ENCODE measurements at regions of chr15 and their contacts with region 1.

Region 1: DNA sequence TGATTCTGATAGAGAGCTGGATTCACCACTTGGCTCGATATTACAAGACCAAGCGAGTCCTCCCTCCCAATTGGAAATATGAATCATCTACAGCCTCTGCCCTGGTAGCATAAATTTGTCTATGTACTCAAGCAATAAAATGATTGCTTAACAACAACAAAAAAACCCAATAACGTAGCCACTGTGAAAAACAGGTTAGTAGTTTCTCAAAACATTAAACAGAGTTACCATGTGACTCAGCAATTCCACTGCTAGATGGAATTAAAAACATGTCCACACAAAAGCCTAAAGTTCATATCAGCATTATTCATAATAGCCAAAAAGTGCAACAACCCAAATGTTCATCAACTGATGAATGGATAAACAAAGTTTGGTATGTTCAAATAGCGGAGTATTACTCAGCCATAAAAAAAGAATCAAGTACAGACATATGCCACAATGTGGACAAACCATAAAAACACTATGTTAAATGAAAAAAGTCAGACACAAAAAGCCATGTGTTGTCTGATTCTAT is 16.9 kb downstream of the BCL2L10 start:
- DNase-seq: no peak
- H3K4me3 ChIP-seq: no peak overlapping the region
- H3K27ac ChIP-seq: no peak overlapping the region
- H3K27me3 ChIP-seq: no peaks in the 10 kb centered on the region
- CTCF ChIP-seq: no peak

Region 2: GRCh38 chr15:52134502-52135144 is 38.9 kb after region 1 on chr15:
- intact Hi-C with region 1: loop called in 1 of 2 experiments (anchors 5 kb)
- DNase-seq: no peak
- H3K4me3 ChIP-seq: no peak overlapping the region
- H3K27ac ChIP-seq: peak overlapping the region in 2 of 59 donors; percentile 4 to 21
- H3K27me3 ChIP-seq: no peaks in the 10 kb centered on the region
- CTCF ChIP-seq: no peak

Region 3: GRCh38 chr15:52392008-52392687 is 296.5 kb after region 1 on chr15:
- intact Hi-C with region 1: no loop called
- DNase-seq: no peak
- H3K4me3 ChIP-seq: no peak overlapping the region
- H3K27ac ChIP-seq: peak overlapping the region in 3 of 59 donors; percentile 2 to 49 (median 8)
- H3K27me3 ChIP-seq: no peaks in the 10 kb centered on the region
- CTCF ChIP-seq: no peak